Activated naive CD4-positive, alpha-beta T cell treated with anti-CD3 and anti-CD28 coated beads for 36 hours (primary cell): ENCODE measurements at regions of chr6 and their contacts with region 1.

Region 1: DNA sequence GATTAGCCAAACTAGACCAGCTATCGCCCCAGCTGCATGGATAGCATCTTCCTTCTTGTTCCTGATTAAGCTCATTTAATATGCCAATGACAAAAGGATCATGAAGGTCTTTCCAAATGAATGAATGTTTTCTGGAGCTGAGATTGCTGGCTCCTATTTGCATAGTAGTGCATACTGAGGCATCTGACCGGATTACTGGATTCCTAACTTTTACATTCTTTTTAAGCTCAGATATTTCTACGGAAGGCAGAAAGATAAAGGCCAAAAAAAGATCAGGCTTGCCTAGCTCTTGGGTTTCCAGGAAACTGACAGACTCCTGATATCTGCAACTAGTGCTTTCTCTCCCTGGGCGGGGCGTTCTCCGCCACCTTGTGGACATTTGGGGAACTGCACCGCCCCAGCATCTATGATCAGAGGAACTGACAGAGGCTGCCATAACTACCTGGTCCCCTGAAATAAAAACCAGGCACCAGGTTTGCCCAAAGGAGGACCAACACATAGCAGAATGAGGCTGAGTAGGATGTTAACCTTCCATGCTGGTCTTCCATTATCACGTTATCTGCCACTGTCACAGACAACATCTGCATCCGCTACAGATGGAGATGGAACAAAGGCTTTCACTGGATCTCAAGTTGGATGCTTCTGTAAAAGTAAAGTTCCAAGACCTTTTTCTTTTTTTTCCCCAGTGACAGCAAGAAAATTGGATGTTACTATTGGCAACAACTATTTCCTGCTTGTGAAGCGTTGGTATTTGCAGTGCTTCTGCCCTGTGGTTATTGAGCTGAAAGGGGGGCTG is 33.2 kb downstream of the NT5E start:
- DNase-seq: peak; percentile 87
- H3K4me3 Mint-ChIP-seq: no peak overlapping the region
- H3K27ac Mint-ChIP-seq: no peak overlapping the region
- H3K4me1 Mint-ChIP-seq: peaks cover 7% of the 10 kb centered on the region
- H3K27me3 Mint-ChIP-seq: peaks cover 2% of the 10 kb centered on the region

Region 2: DNA sequence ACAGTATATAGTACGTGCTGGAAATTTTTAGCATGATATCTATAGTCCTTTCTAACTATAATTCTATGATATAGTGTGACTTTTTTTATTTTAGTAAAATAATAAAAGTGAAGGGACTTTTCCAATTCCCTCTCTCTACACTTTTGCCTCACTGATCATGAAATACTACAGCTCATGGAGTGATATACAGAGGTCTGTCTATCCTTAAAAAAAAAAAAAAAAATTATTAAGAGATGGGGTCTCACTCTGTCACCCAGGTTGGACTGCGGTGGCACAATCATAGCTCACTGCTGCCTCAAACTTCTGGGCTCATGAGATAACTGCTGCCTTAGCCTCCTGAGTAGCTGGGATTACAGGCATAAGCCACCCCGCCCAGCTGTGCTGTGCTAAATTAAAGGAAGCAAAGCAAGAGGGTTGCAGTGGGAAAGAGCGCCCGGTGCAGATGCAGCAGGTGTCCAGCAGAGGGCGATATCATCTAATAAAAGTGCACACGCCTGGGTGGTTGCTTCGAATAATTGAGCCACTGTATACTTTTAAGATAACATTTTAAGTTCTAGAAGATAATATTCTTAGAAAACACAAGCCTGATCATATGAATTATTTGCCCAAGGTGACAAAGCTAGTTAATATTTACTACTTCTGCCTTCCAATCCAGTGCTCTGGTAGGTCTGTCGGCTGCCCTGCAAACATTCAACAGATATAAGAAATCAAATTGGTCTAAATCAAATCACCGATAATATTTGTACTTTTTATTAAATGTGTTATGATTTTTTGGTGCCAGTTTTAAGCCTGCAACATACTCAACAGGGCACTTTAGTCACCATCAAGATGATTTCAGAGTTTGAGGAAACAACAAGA is 128.1 kb before region 1 on chr6:
- CTCF ChIA-PET with region 1: interaction called, 109 read pairs
- intact Hi-C with region 1: loop called (anchors 1 kb)
- DNase-seq: peak; percentile 71
- H3K4me3 Mint-ChIP-seq: no peak overlapping the region
- H3K27ac Mint-ChIP-seq: no peak overlapping the region
- H3K4me1 Mint-ChIP-seq: no peaks in the 10 kb centered on the region
- H3K27me3 Mint-ChIP-seq: peaks cover 2% of the 10 kb centered on the region

Region 3: DNA sequence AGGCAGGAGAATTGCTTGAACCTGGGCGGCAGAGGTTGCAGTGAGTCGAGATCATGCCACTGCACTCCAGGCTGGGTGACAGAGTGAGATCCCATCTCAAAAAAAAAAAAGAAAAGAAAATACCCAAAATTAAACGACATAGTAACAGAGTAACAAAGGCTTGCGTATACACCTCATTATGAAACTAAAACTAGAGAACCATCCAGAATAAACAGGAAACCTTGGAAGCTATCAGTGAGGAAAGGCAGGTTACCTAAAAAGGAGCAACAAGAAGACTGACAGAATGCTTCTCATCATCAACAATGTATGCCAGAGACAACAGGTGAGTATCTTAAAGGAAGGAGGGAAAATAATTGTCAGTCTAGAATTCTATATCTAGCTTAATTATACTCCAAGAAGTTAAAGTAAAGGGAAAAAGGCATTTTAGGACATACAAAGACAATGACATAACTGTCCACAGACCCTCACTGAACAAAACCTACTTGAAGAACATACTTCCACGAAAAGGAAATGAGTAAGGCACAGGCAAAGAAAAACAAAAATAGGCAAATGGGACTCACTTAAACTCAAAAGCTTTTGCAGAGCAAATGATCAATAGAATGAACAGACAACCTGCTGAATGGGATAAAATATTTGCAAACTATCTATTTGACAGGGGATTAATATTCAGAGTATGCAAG is 97.3 kb before region 1 on chr6:
- CTCF ChIA-PET with region 1: interaction called, 10 read pairs
- intact Hi-C with region 1: no loop called
- DNase-seq: no peak
- H3K4me3 Mint-ChIP-seq: no peak overlapping the region
- H3K27ac Mint-ChIP-seq: no peak overlapping the region
- H3K4me1 Mint-ChIP-seq: peaks cover 3% of the 10 kb centered on the region
- H3K27me3 Mint-ChIP-seq: peaks cover 3% of the 10 kb centered on the region

Region 4: DNA sequence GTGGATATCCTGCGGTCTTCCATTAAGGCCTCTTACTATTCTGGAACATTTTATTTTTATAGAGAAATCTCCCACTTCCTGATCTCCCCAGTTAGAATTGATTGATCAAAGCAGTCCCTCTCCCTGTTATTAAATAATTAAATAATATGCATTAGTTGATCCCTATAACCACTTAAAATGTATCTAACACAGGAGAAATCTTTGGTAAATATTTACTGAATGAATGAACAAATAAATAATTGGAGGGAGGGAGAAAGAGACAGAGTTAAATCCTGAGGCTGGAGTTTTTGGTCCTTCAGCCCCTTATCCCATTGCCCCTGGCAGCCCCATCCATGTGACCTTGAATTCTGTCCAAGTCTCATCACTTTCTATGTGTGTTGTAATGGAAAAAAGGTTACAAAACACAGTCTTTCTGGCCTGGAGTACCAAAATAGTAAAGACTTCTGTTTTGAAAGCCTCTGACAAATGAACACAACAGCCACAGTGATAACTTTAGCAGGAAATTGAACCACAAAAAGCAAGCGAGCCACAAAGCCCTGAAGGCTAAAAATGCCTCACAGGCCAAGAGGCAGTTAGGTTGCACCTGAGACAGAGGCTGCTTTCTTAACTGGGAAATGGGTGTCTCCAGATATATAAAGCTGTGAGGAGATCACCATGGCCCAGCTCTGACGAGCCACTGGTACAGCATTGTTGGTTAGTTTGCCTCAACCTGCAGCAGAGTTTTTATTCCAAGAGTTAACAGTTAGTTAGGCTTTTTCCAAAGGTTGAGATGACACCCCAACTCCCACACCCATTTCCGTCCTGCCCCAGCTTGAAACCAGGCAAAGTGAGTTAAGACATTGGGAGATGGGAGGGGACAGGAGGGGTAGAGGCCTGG is 21.9 kb before region 1 on chr6:
- CTCF ChIA-PET with region 1: interaction called, 78 read pairs
- intact Hi-C with region 1: loop called (anchors 1 kb)
- DNase-seq: peak; percentile 67
- H3K4me3 Mint-ChIP-seq: no peak overlapping the region
- H3K27ac Mint-ChIP-seq: peak overlapping the region; percentile 81
- H3K4me1 Mint-ChIP-seq: peaks cover 65% of the 10 kb centered on the region
- H3K27me3 Mint-ChIP-seq: peaks cover 6% of the 10 kb centered on the region

Region 5: DNA sequence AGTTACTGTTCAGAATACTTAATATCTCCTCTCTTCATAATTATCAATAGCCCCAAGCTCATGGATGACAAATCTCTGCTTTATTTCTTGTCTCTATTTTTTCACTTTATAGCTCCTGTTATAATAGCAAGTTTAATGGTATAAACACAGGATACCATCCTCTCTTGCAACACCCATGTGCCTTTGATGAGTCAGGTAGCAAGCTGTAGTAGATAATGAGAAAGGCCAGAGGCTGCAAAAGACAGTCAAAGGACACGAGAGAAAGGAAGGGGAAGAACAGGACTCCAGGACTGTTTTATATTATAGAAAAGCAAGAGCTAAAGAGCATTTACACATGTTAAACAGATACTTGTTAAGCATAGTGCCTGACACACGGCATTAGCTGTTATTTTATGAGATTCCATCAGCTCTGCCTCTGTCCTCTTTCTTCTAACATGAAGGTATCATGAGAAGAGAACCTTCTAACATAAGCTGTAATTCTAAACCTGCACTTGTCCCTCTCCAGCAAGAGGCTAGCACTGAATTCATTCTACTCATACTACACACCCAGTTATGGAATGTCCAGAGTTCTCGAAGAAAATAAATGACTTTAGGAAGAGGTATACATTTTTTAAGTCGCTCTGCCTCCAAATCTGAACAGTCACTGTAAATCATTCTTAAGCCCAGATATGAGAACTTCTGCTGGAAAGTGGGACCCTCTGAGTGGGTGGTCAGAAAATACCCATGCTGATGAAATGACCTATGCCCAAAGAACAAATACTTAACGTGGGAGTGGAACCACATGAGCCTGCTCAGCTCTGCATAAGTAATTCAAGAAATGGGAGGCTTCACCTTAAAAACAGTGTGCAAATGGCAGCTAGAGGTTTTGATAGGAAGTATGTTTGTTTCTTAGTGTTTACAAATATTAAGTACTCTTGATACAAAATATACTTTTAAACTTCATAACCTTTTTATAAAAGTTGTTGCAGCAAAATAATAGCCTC is 11.7 kb after region 1 on chr6:
- CTCF ChIA-PET with region 1: interaction called, 30 read pairs
- intact Hi-C with region 1: no loop called
- DNase-seq: no peak
- H3K4me3 Mint-ChIP-seq: no peak overlapping the region
- H3K27ac Mint-ChIP-seq: no peak overlapping the region
- H3K4me1 Mint-ChIP-seq: peaks cover 1% of the 10 kb centered on the region
- H3K27me3 Mint-ChIP-seq: no peaks in the 10 kb centered on the region

Region 6: GRCh38 chr6:85865420-85866369 is 382.6 kb after region 1 on chr6:
- CTCF ChIA-PET with region 1: no interaction called
- intact Hi-C with region 1: no loop called
- DNase-seq: no peak
- H3K4me3 Mint-ChIP-seq: no peak overlapping the region
- H3K27ac Mint-ChIP-seq: no peak overlapping the region
- H3K4me1 Mint-ChIP-seq: no peaks in the 10 kb centered on the region
- H3K27me3 Mint-ChIP-seq: no peaks in the 10 kb centered on the region

Region 7: GRCh38 chr6:86937219-86938079 is 1454.3 kb after region 1 on chr6 and contains the start of gene HTR1E:
- CTCF ChIA-PET with region 1: no interaction called
- intact Hi-C with region 1: loop called (anchors 10 kb)
- DNase-seq: peak; percentile 34
- H3K4me3 Mint-ChIP-seq: no peak within 1 kb of the TSS
- H3K27ac Mint-ChIP-seq: no peak within 1 kb of the TSS
- H3K4me1 Mint-ChIP-seq: peaks cover 2% of the 10 kb centered on the region
- H3K27me3 Mint-ChIP-seq: peaks cover 37% of the 10 kb centered on the region
- total RNA-seq, gene HTR1E: not detected